Activated naive CD4-positive, alpha-beta T cell treated with anti-CD3 and anti-CD28 coated beads for 36 hours (primary cell): ENCODE measurements at regions of chr1 and their contacts with region 1.

Region 1: DNA sequence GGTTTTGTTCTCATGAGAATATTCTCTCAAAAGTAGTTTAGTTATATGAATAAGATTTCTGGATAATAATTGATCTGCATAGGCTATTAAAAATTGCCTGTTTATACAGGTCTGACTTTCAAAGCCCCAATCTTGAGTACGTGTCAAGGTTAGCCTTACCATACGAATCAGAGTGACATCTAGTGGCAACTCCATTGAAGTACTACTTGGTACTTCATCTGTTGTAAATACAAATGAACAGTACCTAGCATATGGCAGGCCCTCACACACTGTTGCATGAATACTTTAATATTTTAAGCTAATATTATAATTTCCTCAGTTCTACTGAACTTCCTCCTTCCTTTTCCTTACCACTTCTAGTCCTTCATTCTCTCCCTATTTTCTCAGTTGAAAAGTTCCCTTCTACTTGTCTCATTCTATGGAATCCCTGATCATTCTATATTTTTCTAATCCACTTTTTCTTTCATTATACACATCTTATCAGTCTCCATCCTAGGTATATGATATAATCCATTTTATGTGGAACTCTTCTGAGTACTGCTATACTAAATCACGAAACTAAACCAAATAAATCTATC is 101.2 kb downstream of the AKT3 start:
- DNase-seq: no peak
- H3K4me3 Mint-ChIP-seq: no peak overlapping the region
- H3K27ac Mint-ChIP-seq: no peak overlapping the region
- H3K4me1 Mint-ChIP-seq: peaks cover 25% of the 10 kb centered on the region
- H3K27me3 Mint-ChIP-seq: no peaks in the 10 kb centered on the region

Region 2: DNA sequence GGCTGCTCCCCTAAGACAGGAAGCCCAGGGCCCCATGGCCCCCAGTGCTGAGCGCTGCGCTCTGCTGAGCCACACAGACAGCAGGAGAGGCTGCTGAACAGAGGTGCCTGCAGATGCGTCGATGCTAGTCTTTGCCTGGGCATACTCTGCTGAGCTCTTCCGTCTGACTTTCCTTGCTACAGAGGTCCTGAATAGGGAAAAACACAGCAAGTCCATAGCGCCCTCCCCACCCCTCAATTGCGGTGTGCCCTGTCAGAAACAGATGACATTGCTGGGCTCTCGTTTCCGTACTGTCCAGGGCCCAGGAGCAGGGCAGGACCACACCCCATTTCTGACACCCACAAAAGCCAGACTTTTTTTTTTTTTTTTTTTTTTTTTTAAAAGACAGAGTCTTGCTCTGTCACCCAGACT is 240.5 kb before region 1 on chr1:
- CTCF ChIA-PET with region 1: no interaction called
- intact Hi-C with region 1: loop called (anchors 10 kb)
- DNase-seq: peak; percentile 34
- H3K4me3 Mint-ChIP-seq: no peak overlapping the region
- H3K27ac Mint-ChIP-seq: no peak overlapping the region
- H3K4me1 Mint-ChIP-seq: peaks cover 21% of the 10 kb centered on the region
- H3K27me3 Mint-ChIP-seq: no peaks in the 10 kb centered on the region

Region 3: GRCh38 chr1:244065960-244066388 is 317.2 kb after region 1 on chr1:
- CTCF ChIA-PET with region 1: no interaction called
- intact Hi-C with region 1: no loop called
- DNase-seq: no peak
- H3K4me3 Mint-ChIP-seq: no peak overlapping the region
- H3K27ac Mint-ChIP-seq: no peak overlapping the region
- H3K4me1 Mint-ChIP-seq: peaks cover 16% of the 10 kb centered on the region
- H3K27me3 Mint-ChIP-seq: no peaks in the 10 kb centered on the region